ENCODE measurements at regions of chr7 and their contacts with region 1.

Region 1: DNA sequence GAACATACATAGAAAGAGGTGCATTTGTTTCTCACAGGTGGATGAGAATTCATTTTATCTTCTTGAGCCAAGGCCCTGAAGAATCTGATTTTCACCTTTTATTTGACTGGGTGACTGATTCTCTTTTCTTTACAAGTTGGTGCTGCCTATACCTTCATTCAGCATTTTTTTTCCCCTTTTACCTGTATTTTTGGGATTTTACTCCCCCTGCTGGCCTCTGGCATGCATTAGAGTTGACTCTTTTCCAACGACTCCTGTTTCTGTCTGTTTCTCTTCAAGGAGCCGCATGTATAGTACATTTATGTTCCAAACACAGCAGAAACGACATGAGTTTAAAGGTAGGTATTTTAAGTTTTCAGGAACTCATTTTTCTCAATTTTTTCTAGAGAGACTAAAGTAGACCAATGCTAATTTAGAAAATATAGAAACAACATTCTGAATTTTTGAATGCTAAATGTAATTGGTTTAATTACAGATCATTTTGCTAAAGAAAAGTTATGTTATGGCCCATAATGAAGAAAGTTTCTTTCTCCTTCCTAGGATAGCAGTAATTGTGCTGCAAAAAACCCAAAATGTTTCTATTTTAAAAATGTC is 149.8 kb upstream of the HDAC9 start:
- DNase-seq: peak in 1 of 2 experiments; percentile 64
- H3K4me3 ChIP-seq: no peak overlapping the region
- H3K4me3 Mint-ChIP-seq: no peak overlapping the region
- H3K27ac Mint-ChIP-seq: no peak overlapping the region
- H3K4me1 ChIP-seq: no peaks in the 10 kb centered on the region
- H3K4me1 Mint-ChIP-seq: no peaks in the 10 kb centered on the region
- H3K27me3 ChIP-seq: no peaks in the 10 kb centered on the region
- H3K27me3 Mint-ChIP-seq: peaks cover 4% of the 10 kb centered on the region
- CTCF ChIP-seq: peak; percentile 76

Region 2: GRCh38 chr7:17680943-17681351 is 664.8 kb before region 1 on chr7:
- CTCF ChIA-PET with region 1: interaction called, 5 read pairs
- POLR2A ChIA-PET with region 1: no interaction called
- intact Hi-C with region 1: loop called (anchors 1 kb)
- DNase-seq: peak in 1 of 2 experiments; percentile 15
- H3K4me3 ChIP-seq: no peak overlapping the region
- H3K4me3 Mint-ChIP-seq: no peak overlapping the region
- H3K27ac Mint-ChIP-seq: no peak overlapping the region
- H3K4me1 ChIP-seq: peaks cover 20% of the 10 kb centered on the region
- H3K4me1 Mint-ChIP-seq: peaks cover 10% of the 10 kb centered on the region
- H3K27me3 ChIP-seq: no peaks in the 10 kb centered on the region
- H3K27me3 Mint-ChIP-seq: no peaks in the 10 kb centered on the region
- CTCF ChIP-seq: peak; percentile 9 to 64

Region 3: GRCh38 chr7:17965603-17966002 is 380.1 kb before region 1 on chr7:
- CTCF ChIA-PET with region 1: no interaction called
- POLR2A ChIA-PET with region 1: no interaction called
- intact Hi-C with region 1: loop called (anchors 10 kb)
- DNase-seq: no peak
- H3K4me3 ChIP-seq: no peak overlapping the region
- H3K4me3 Mint-ChIP-seq: no peak overlapping the region
- H3K27ac Mint-ChIP-seq: no peak overlapping the region
- H3K4me1 ChIP-seq: peaks cover 37% of the 10 kb centered on the region
- H3K4me1 Mint-ChIP-seq: peaks cover 16% of the 10 kb centered on the region
- H3K27me3 ChIP-seq: no peaks in the 10 kb centered on the region
- H3K27me3 Mint-ChIP-seq: no peaks in the 10 kb centered on the region
- CTCF ChIP-seq: no peak

Region 4: DNA sequence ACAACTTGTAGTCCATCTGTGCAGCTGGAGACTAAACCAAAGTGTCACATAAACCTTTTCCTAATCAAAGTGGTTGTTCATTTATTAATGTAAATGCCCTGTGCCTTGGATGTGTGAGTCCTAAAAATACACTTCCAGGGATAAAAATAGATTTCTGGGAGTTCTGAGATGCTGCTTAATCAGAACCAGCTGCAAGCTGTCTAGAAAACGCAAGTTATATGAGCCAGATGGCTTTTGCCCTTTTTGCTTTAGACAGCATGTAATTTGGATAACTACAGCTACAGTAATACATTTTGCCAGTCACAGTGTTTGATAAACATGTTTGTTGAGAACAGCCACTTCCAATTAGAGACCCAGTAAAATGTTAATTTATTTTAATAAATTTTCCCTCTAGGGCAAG is 133.0 kb before region 1 on chr7:
- CTCF ChIA-PET with region 1: no interaction called
- POLR2A ChIA-PET with region 1: no interaction called
- intact Hi-C with region 1: loop called (anchors 1 kb)
- DNase-seq: no peak
- H3K4me3 ChIP-seq: no peak overlapping the region
- H3K4me3 Mint-ChIP-seq: no peak overlapping the region
- H3K27ac Mint-ChIP-seq: no peak overlapping the region
- H3K4me1 ChIP-seq: no peaks in the 10 kb centered on the region
- H3K4me1 Mint-ChIP-seq: peaks cover 6% of the 10 kb centered on the region
- H3K27me3 ChIP-seq: no peaks in the 10 kb centered on the region
- H3K27me3 Mint-ChIP-seq: peaks cover 4% of the 10 kb centered on the region
- CTCF ChIP-seq: no peak